Calu3 (cell line): ENCODE measurements at regions of chr1 and their contacts with region 1.

Region 1: DNA sequence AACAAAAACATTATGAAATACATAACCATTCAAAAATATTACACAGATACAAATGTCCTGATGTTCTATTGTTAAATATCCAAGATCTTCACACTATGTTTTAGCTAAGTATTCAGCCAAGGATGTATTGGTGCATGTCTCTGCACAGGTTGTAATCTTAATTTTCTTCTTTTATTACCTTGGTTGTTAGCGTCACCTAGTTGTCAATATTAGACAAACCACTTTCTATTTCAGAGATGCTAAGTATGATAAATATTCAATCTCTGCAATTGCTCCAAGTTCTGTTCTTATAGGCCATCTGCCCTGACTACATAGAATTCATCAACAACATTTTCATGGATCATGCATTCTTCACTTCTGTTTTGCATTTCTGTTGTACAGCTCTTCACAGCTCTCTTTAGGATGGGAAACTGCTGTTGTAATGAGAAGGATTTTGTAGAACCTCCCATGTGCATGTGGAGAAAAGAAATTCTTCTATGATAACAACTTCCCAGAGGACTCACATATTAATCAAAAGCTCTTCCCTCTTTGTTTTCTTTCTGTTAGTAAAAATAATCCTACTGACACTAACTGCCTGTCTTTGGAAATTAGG is 380.1 kb downstream of the NUF2 start:
- DNase-seq: no peak
- H3K4me3 Mint-ChIP-seq: no peak overlapping the region
- H3K27ac Mint-ChIP-seq: no peak overlapping the region
- H3K4me1 Mint-ChIP-seq: no peaks in the 10 kb centered on the region
- H3K27me3 Mint-ChIP-seq: no peaks in the 10 kb centered on the region
- CTCF ChIP-seq: no peak

Region 2: DNA sequence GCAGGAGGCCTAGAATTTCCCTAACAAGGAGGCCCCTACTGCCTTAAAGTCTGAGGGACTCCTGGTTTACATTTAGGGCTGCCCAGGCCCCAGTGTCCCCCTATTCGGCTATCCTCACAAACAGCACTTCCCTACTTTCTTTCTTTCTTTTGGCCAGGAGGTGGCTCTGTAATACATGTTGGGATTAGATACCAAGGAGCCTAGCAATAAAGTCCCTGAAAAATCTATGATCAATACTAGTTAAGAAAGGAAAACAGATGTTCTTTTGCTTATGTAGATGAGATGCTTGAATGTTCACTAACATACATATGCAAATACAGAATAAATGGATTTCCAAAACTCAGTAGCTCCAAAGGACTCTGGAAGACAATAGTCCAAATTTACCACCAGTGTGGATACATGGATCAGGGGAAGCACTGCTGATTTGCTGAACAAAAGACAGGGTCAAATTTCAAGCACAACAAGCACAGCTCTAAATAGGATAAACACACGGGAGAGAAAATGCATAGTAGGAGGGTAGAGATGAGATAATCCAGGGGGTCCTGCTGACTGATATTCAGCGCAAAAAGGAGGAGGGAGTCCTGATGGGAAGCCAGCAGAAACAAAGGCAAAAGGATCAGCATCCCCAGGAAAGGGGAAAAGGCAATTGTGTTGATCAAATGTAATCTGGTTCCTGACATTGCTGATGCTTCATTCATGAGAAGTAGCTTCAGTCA is 140.1 kb before region 1 on chr1:
- CTCF ChIA-PET with region 1: no interaction called
- intact Hi-C with region 1: loop called (anchors 5 kb)
- DNase-seq: peak; percentile 8
- H3K4me3 Mint-ChIP-seq: no peak overlapping the region
- H3K27ac Mint-ChIP-seq: no peak overlapping the region
- H3K4me1 Mint-ChIP-seq: no peaks in the 10 kb centered on the region
- H3K27me3 Mint-ChIP-seq: no peaks in the 10 kb centered on the region
- CTCF ChIP-seq: no peak